Posterior vena cava (tissue), 2 donors: ENCODE measurements at regions of chr3 and their contacts with region 1.

Region 1: DNA sequence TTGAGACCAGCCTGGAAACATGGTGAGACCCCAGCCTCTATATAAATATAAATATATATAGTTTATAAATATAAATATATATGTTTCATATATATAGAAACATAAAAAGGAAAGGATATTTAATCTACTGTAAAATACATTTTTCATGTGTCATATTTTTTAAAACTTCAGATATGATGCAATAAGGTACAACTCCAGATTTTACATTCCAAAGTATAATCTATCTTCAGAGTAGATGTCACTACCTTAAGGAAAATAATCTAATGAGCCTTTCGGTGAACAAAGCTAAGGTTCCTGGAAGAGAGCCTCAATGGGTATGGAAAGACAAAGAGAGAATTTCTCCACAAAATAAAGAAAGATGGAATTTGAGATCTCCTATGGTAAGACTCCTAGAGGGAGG is 16.9 kb downstream of the EFHB start:
- DNase-seq: no peak

Region 2: GRCh38 chr3:19866751-19867347 is 50.3 kb before region 1 on chr3:
- intact Hi-C with region 1: no loop called
- DNase-seq: no peak

Region 3: DNA sequence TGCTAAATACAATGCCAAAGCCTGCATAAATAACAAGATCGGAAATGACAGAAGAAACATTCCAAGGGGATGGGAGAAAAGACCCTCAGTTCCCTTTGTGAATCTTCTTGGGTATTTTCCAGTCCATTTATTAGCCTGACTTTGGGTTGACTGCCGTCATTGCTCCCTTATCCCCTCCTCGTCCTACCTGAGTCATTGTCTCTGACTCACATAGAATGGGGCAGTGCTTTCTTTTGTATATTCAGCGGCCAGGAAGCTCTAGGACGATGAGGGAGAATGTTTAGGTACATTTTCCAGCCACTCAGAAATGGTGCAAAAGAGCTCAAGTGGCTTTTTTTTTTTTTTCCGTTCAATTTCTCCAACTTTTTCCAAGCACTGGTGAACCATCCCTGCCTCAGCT is 194.7 kb after region 1 on chr3:
- intact Hi-C with region 1: no loop called
- DNase-seq: no peak

Region 4: DNA sequence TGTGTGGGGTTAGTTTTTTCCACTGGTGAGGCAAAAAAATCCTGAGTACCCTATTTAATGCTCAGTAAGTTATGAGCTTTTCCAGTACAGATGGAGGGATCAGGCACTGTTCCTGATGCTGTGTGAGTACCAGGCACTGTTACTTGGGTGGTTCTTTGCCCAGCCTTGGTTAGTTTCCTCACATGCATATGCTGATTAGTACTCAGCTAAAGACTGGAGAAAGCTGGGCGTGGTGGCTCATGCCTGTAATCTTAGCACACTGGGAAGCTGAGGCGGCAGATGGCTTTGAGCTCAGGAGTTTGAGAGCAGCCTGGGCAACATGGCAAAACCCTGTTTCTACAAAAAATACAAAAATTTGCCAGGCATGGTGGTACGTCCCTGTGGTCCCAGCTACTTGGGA is 479.2 kb after region 1 on chr3:
- intact Hi-C with region 1: loop called in 1 of 2 experiments (anchors 5 kb)
- DNase-seq: no peak